ENCODE measurements at regions of chr19 and their contacts with region 1.

Region 1: GRCh38 chr19:4352701-4353121 is 9.3 kb downstream of the MPND start:
- DNase-seq: no peak
- ATAC-seq: peak; percentile 92
- H3K4me3 Mint-ChIP-seq: no peak overlapping the region
- H3K27ac Mint-ChIP-seq: no peak overlapping the region
- H3K4me1 Mint-ChIP-seq: peaks cover 2% of the 10 kb centered on the region
- H3K27me3 Mint-ChIP-seq: no peaks in the 10 kb centered on the region
- CTCF ChIP-seq: peak; percentile 34

Region 2: GRCh38 chr19:3762501-3763459 is 589.9 kb before region 1 on chr19 and contains the start of gene MRPL54:
- CTCF ChIA-PET with region 1: no interaction called
- POLR2A ChIA-PET with region 1: no interaction called
- intact Hi-C with region 1: no loop called
- DNase-seq: peak; percentile 99
- ATAC-seq: peak; percentile 81
- H3K4me3 Mint-ChIP-seq: peak within 1 kb of the TSS; percentile 96
- H3K27ac Mint-ChIP-seq: peak within 1 kb of the TSS; percentile 100
- H3K4me1 Mint-ChIP-seq: peaks cover 43% of the 10 kb centered on the region
- H3K27me3 Mint-ChIP-seq: no peaks in the 10 kb centered on the region
- CTCF ChIP-seq: no peak
- total RNA-seq, gene MRPL54: 81.2 and 90.0 TPM in 2 replicates

Region 3: DNA sequence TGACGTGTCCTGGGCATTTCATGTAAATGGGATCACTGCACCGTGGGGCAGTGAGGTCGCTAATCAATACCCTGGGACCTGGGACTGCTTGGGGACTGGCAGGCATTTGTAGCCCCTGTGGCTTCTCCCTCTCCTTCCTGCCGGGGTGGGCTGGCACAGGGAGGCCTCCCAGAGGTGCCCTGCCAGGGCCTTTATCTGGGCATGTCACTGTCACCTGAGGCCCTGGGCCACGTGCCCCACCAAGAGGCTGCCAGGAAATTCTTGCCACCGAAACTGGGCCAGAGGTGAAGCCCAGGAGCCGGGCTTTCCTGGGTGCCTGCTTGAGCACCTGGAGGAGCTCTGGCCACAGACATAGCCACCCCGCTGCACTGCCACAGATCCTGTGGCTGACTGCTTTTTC is 421.7 kb before region 1 on chr19:
- CTCF ChIA-PET with region 1: no interaction called
- POLR2A ChIA-PET with region 1: no interaction called
- intact Hi-C with region 1: no loop called
- DNase-seq: no peak
- ATAC-seq: no peak
- H3K4me3 Mint-ChIP-seq: no peak overlapping the region
- H3K27ac Mint-ChIP-seq: no peak overlapping the region
- H3K4me1 Mint-ChIP-seq: no peaks in the 10 kb centered on the region
- H3K27me3 Mint-ChIP-seq: peaks cover 15% of the 10 kb centered on the region
- CTCF ChIP-seq: no peak

Region 4: DNA sequence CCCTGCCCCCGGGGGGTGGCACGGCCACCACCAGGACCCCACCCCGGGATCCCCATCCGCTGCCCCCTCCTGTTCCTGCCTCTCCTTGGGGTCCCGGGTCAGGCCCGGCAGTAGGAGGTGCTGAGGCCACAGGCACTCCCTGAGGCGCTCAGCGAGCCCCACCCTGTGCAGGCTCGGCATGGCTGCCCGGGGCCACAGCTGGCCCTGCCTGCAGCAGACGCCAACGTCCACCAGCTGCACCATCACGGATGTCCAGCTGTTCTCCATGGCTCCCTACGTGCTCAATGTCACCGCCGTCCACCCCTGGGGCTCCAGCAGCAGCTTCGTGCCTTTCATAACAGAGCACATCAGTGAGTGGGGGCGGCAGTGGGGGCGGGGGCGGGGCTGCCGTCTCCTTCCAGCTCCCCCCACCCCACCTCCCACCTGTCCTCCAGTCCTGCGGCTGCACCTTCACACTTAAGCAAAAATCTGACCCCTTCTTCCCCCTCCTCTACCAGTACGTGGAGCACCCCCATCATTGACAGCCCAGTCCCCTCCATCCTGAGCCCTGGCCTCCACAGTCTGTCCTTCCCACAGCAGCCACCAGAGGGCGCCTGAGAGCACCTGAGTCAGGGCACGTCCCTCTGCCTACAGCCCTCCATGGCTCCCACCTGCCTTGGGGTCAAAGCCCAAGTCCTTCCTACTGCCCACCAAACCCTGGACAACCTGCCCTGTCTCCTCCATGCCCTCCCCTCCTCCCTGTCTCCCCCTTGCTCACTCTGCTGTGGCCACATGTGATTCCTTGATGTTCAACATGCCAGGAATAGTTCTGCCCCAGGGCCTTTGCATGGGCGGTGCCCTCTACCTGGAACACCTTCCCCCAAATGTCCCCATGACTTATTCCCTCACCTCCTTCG is 119.5 kb before region 1 on chr19:
- CTCF ChIA-PET with region 1: no interaction called
- POLR2A ChIA-PET with region 1: no interaction called
- intact Hi-C with region 1: loop called (anchors 1 kb)
- DNase-seq: peak; percentile 71
- ATAC-seq: no peak
- H3K4me3 Mint-ChIP-seq: peak overlapping the region; percentile 60
- H3K27ac Mint-ChIP-seq: peak overlapping the region; percentile 62
- H3K4me1 Mint-ChIP-seq: peaks cover 16% of the 10 kb centered on the region
- H3K27me3 Mint-ChIP-seq: no peaks in the 10 kb centered on the region
- CTCF ChIP-seq: no peak

Region 5: GRCh38 chr19:4267101-4267900 is 85.4 kb before region 1 on chr19:
- CTCF ChIA-PET with region 1: interaction called, 22 read pairs
- POLR2A ChIA-PET with region 1: interaction called, 12 read pairs
- intact Hi-C with region 1: loop called (anchors 1 kb)
- DNase-seq: peak; percentile 55
- ATAC-seq: peak; percentile 75
- H3K4me3 Mint-ChIP-seq: no peak overlapping the region
- H3K27ac Mint-ChIP-seq: no peak overlapping the region
- H3K4me1 Mint-ChIP-seq: peaks cover 15% of the 10 kb centered on the region
- H3K27me3 Mint-ChIP-seq: no peaks in the 10 kb centered on the region
- CTCF ChIP-seq: no peak

Region 6: DNA sequence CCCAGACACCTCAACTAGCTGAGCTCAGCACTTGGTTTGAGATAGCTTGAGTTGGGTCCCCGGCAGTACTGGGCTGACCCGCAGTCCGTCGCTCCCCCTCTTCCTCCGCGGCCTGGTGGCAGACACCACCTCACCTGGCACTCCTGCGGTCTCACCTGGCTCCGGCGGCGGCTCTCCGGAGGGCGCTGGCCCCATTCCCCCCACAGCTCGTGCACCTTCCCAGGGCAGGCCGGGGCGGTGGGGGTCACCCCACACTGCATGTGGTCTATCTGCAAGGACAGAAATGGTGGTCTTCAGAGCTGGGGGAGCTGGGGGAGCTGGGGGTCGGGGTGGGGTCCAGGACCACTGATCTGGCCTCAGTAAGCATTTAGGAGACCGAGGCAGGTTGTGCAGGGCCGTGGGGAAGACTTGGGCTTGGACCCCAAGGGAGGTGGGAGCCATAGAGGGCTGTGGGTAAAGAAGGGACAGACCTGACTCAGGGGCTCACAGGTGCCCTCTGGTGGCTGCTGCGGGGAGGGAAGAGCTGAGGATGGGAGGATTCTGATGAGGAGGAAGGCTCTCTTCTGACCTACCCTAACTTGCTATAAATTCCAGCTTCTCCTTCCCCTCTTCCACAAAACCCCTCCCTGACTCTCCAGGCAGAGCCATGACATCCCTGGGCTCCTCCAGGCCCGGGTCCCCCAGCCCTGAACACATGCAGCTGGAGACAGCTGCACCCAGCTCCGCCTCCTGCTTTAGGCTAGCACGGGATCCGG is 172.3 kb after region 1 on chr19:
- CTCF ChIA-PET with region 1: no interaction called
- POLR2A ChIA-PET with region 1: no interaction called
- intact Hi-C with region 1: loop called (anchors 1 kb)
- DNase-seq: peak; percentile 60
- ATAC-seq: peak; percentile 82
- H3K4me3 Mint-ChIP-seq: no peak overlapping the region
- H3K27ac Mint-ChIP-seq: no peak overlapping the region
- H3K4me1 Mint-ChIP-seq: no peaks in the 10 kb centered on the region
- H3K27me3 Mint-ChIP-seq: peaks cover 6% of the 10 kb centered on the region
- CTCF ChIP-seq: peak; percentile 28

Measured in activated B cell treated with CpG ODN at 0.5 μM for 24 hours (primary cell).